ENCODE measurements at regions of chr1 and their contacts with region 1.

Region 1: DNA sequence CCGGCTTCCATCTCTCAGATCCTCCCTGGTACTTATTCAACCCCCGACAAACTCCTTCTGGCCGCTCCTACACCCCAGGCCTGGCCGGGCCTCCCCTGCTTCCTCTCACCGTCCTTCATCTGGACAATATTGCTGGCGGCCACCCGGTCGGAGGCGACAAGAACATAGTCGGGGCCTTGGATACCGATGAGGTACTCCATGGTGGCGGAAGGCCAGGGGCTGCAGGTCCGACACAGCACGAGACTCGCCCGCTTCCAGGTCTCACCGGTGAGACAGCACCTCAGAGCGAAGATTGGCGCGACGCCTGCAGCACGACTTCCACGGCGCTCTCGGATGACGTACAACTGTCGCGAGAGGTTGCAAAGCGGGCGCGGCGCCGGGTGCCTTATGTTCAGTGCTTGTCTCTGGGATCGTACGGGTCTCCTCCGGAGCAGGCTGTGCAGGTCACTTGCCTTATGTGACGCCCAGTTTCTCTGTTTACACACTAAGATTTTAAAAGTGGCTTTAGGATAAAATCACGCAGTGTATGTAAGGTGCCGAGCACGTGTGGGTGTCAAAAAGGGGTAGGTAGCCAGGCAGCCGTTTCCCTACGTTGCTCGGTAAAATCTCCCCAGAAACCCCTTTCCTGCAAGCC is at the start of gene PSMB2:
- DNase-seq: peak; percentile 99
- ATAC-seq: peak; percentile 92
- H3K4me3 Mint-ChIP-seq: peak within 1 kb of the TSS; percentile 100
- H3K27ac Mint-ChIP-seq: peak within 1 kb of the TSS; percentile 100
- H3K4me1 Mint-ChIP-seq: peaks cover 26% of the 10 kb centered on the region
- H3K27me3 Mint-ChIP-seq: peaks cover 18% of the 10 kb centered on the region
- total RNA-seq, gene PSMB2: 97.1 to 125 TPM

Region 2: DNA sequence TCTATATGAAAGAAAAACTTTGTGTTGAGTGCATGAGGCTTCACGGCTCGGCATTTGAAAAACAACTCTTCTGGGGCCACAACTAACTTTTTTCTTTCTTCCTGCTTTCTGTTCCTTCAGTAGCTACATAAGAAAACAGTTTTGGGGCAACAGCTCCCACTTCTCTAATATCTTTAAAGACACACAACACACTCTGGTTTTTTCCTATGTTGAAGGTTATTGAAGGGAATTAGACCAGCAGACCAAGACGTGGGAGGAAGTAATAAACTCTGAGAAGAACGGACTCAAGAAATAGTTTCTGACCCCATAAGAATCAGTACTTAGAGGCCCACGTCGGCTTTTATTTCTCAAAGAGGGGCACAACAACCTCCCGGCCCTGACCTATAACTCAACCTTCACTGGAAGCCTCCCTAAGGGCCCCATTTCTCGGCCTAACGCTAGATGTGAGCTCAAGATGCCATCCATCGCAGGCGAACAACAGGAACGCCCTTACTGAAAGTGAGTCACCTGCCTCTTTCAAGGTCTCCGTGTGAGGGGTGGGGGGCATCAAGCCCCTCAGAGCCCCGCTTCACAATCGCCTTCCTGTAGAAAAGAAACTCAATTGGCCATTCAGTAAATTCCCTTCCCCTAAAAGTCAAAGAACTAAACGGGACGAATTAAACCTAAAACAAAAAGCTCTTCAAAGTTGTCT is 610.4 kb before region 1 on chr1:
- CTCF ChIA-PET with region 1: no interaction called
- POLR2A ChIA-PET with region 1: no interaction called
- intact Hi-C with region 1: loop called in 1 of 2 experiments (anchors 2 kb)
- DNase-seq: peak; percentile 63
- ATAC-seq: peak; percentile 70
- H3K4me3 Mint-ChIP-seq: peak overlapping the region; percentile 92
- H3K27ac Mint-ChIP-seq: peak overlapping the region; percentile 92
- H3K4me1 Mint-ChIP-seq: peaks cover 33% of the 10 kb centered on the region
- H3K27me3 Mint-ChIP-seq: no peaks in the 10 kb centered on the region

Region 3: DNA sequence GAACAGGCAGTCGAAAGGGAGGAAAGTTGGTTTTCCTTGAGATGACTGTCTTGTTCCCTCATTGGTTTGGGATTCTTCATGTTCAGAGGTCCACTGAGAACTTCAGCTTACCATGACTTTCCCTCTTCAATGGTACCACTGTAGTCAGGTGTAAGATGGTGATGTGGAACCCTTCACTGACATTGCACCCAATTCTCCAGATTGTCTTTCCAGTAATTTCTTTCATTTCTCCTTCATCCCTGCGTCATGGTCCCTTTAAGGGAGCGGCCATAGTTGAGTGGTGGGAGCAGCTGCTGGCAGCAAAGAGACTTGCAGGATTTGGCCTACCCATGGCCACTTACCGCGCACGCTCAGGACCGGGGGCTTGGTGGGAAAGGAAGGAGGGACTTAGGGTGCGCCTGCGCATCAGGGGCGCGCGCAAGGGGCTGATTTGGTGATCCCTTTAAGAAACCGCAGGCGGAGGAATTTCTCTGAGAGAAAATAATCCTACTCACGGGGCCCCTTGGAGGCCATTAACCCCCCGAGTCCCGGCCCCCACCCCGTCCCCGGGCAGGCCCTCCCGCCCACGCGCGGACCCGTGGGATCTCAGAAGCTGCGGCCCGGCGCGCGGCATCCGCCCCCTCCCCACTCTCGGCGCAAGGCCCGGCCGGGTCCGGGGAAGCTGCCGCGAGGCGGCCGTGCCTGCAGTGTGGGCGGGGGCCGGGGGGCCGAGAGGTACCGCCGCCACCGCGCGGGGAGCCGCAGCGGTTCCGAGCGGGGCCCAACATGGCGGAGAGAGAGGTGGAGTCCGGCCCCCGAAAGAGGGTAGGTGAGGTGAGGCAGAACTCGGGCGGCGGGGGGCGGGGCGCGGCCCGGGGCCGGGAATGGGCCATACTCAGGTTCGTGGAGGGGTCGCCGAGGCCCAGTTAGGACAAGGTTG is 372.8 kb before region 1 on chr1 and contains the start of gene ZMYM4:
- CTCF ChIA-PET with region 1: no interaction called
- POLR2A ChIA-PET with region 1: no interaction called
- intact Hi-C with region 1: loop called in 1 of 2 experiments (anchors 5 kb)
- DNase-seq: peak; percentile 94
- ATAC-seq: peak; percentile 98
- H3K4me3 Mint-ChIP-seq: peak within 1 kb of the TSS; percentile 76
- H3K27ac Mint-ChIP-seq: peak within 1 kb of the TSS; percentile 83
- H3K4me1 Mint-ChIP-seq: peaks cover 30% of the 10 kb centered on the region
- H3K27me3 Mint-ChIP-seq: no peaks in the 10 kb centered on the region
- total RNA-seq, gene ZMYM4: 27.8 to 31.6 TPM

Region 4: DNA sequence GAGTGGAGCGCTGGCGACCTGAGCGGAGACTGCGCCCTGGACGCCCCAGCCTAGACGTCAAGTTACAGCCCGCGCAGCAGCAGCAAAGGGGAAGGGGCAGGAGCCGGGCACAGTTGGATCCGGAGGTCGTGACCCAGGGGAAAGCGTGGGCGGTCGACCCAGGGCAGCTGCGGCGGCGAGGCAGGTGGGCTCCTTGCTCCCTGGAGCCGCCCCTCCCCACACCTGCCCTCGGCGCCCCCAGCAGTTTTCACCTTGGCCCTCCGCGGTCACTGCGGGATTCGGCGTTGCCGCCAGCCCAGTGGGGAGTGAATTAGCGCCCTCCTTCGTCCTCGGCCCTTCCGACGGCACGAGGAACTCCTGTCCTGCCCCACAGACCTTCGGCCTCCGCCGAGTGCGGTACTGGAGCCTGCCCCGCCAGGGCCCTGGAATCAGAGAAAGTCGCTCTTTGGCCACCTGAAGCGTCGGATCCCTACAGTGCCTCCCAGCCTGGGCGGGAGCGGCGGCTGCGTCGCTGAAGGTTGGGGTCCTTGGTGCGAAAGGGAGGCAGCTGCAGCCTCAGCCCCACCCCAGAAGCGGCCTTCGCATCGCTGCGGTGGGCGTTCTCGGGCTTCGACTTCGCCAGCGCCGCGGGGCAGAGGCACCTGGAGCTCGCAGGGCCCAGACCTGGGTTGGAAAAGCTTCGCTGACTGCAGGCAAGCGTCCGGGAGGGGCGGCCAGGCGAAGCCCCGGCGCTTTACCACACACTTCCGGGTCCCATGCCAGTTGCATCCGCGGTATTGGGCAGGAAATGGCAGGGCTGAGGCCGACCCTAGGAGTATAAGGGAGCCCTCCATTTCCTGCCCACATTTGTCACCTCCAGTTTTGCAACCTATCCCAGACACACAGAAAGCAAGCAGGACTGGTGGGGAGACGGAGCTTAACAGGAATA is 64.0 kb before region 1 on chr1:
- CTCF ChIA-PET with region 1: no interaction called
- POLR2A ChIA-PET with region 1: no interaction called
- intact Hi-C with region 1: loop called in 1 of 2 experiments (anchors 1 kb)
- DNase-seq: peak; percentile 74
- ATAC-seq: peak; percentile 83
- H3K4me3 Mint-ChIP-seq: peak overlapping the region; percentile 63
- H3K27ac Mint-ChIP-seq: peak overlapping the region; percentile 80
- H3K4me1 Mint-ChIP-seq: peaks cover 20% of the 10 kb centered on the region
- H3K27me3 Mint-ChIP-seq: peaks cover 12% of the 10 kb centered on the region

Region 5: DNA sequence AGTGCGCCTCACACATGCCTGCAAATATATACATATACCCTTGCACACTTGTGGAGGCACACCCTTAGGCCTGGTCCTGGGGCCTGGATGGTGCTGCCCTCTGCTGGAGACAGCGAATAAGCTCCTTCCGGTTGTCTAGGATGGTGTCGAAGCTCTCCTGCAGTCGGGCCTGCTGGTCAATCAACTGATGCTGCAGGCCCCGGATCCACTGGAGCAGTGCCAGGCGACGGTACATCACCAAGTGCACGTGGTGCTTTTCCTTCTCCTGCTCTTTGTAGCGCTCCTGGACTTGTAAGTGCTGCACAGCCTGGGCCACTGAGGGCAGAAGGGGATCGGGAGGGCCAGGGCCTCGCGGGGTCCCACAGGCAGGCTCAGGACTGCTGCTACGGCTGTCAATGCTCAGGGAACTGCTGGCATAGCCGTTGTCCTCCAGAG is 74.2 kb after region 1 on chr1:
- CTCF ChIA-PET with region 1: interaction called, 5 read pairs
- POLR2A ChIA-PET with region 1: interaction called, 3 read pairs
- intact Hi-C with region 1: loop called (anchors 1 to 2 kb)
- DNase-seq: peak; percentile 90
- ATAC-seq: peak; percentile 61
- H3K4me3 Mint-ChIP-seq: peak overlapping the region; percentile 37
- H3K27ac Mint-ChIP-seq: no peak overlapping the region
- H3K4me1 Mint-ChIP-seq: peaks cover 31% of the 10 kb centered on the region
- H3K27me3 Mint-ChIP-seq: no peaks in the 10 kb centered on the region

Region 6: DNA sequence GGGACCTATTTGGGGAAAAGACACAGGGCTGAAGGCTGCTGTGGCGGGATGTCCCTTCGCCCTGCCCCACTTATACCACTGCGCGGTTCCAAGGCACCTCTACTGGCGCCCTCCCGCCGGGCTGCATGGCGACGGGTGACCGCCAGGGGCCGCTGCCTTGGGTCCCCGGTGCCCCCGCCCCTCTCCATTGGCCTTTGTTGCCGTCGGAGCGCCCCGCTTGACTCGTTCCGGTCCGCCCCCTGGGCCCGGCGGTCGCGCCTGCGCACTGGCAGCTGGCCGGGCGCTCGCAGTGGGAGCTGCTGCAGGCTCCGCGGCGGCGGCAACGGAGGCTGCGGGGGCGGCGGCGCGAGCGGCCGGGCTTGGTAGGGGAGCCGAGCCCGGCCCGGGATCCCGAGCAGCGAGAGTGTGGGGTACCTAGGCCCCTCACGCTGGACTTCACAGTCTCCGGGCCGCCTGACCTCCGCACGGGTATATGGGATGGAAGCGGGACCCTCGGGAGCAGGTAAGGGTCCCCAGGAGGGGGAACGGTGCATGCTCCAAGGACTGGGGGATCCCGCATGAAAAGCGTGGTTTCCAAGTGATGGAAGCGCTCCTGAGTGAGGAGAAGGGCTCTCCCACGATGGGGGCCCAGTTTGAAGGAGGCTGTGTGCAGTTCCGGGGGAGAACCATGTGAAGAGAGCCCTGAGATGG is 241.7 kb after region 1 on chr1 and contains the start of gene AGO1:
- CTCF ChIA-PET with region 1: no interaction called
- POLR2A ChIA-PET with region 1: no interaction called
- intact Hi-C with region 1: loop called in 1 of 2 experiments (anchors 2 kb)
- DNase-seq: peak; percentile 98
- ATAC-seq: peak; percentile 95
- H3K4me3 Mint-ChIP-seq: peak within 1 kb of the TSS; percentile 91
- H3K27ac Mint-ChIP-seq: peak within 1 kb of the TSS; percentile 73
- H3K4me1 Mint-ChIP-seq: peaks cover 46% of the 10 kb centered on the region
- H3K27me3 Mint-ChIP-seq: no peaks in the 10 kb centered on the region
- total RNA-seq, gene AGO1: 31.5 to 34.6 TPM